ENCODE measurements at regions of chr5 and their contacts with region 1.

Region 1: GRCh38 chr5:32312647-32313523 is at the start of gene MTMR12:
- DNase-seq: peak; percentile 99 to 100 (median 100)
- ATAC-seq: peak; percentile 96
- H3K4me3 ChIP-seq: peak within 1 kb of the TSS; percentile 72
- H3K4me3 Mint-ChIP-seq: peak within 1 kb of the TSS; percentile 89 to 98 (median 92)
- H3K27ac ChIP-seq: peak within 1 kb of the TSS; percentile 79
- H3K27ac Mint-ChIP-seq: peak within 1 kb of the TSS; percentile 88 to 98 (median 95)
- H3K4me1 ChIP-seq: peaks cover 9 to 14% of the 10 kb centered on the region in 2 donors
- H3K4me1 Mint-ChIP-seq: peaks cover 30 to 43% (median 38%) of the 10 kb centered on the region in 7 donors
- H3K27me3 ChIP-seq: no peaks in the 10 kb centered on the region
- H3K27me3 Mint-ChIP-seq: no peaks in the 10 kb centered on the region
- total RNA-seq, gene MTMR12: 19.0 to 28.2 (median 24.0) TPM

Region 2: GRCh38 chr5:32206509-32207354 is 106.2 kb before region 1 on chr5:
- CTCF ChIA-PET with region 1: no interaction called
- POLR2A ChIA-PET with region 1: no interaction called
- intact Hi-C with region 1: loop called in 1 of 2 experiments (anchors 1 kb)
- DNase-seq: no peak
- ATAC-seq: no peak
- H3K4me3 ChIP-seq: no peak overlapping the region
- H3K4me3 Mint-ChIP-seq: no peak overlapping the region
- H3K27ac ChIP-seq: no peak overlapping the region
- H3K27ac Mint-ChIP-seq: peak overlapping the region in 1 of 9 donors; percentile 8
- H3K4me1 ChIP-seq: peaks cover 0 to 4% of the 10 kb centered on the region in 2 donors
- H3K4me1 Mint-ChIP-seq: peaks cover 6 to 19% (median 8%) of the 10 kb centered on the region in 7 donors
- H3K27me3 ChIP-seq: no peaks in the 10 kb centered on the region
- H3K27me3 Mint-ChIP-seq: peaks cover 0 to 8% (median 0%) of the 10 kb centered on the region in 5 donors

Region 3: GRCh38 chr5:32276173-32276853 is 36.6 kb before region 1 on chr5:
- CTCF ChIA-PET with region 1: no interaction called
- POLR2A ChIA-PET with region 1: no interaction called
- intact Hi-C with region 1: loop called (anchors 1 kb)
- DNase-seq: peak in 5 of 9 donors; percentile 6 to 44 (median 33)
- ATAC-seq: peak; percentile 87
- H3K4me3 ChIP-seq: no peak overlapping the region
- H3K4me3 Mint-ChIP-seq: peak overlapping the region in 8 of 10 donors; percentile 15 to 57 (median 43)
- H3K27ac ChIP-seq: no peak overlapping the region
- H3K27ac Mint-ChIP-seq: peak overlapping the region; percentile 41 to 91 (median 75)
- H3K4me1 ChIP-seq: peaks cover 7 to 16% of the 10 kb centered on the region in 2 donors
- H3K4me1 Mint-ChIP-seq: peaks cover 15 to 54% (median 45%) of the 10 kb centered on the region in 7 donors
- H3K27me3 ChIP-seq: no peaks in the 10 kb centered on the region
- H3K27me3 Mint-ChIP-seq: no peaks in the 10 kb centered on the region

Region 4: GRCh38 chr5:32329308-32329834 is 16.5 kb after region 1 on chr5:
- CTCF ChIA-PET with region 1: no interaction called
- POLR2A ChIA-PET with region 1: interaction called, 3 read pairs
- intact Hi-C with region 1: loop called in 1 of 2 experiments (anchors 1 kb)
- DNase-seq: peak; percentile 15 to 59 (median 45)
- ATAC-seq: peak; percentile 93
- H3K4me3 ChIP-seq: no peak overlapping the region
- H3K4me3 Mint-ChIP-seq: no peak overlapping the region
- H3K27ac ChIP-seq: no peak overlapping the region
- H3K27ac Mint-ChIP-seq: peak overlapping the region in 1 of 9 donors; percentile 1
- H3K4me1 ChIP-seq: no peaks in the 10 kb centered on the region
- H3K4me1 Mint-ChIP-seq: peaks cover 0 to 5% (median 0%) of the 10 kb centered on the region in 7 donors
- H3K27me3 ChIP-seq: no peaks in the 10 kb centered on the region
- H3K27me3 Mint-ChIP-seq: no peaks in the 10 kb centered on the region

Region 5: DNA sequence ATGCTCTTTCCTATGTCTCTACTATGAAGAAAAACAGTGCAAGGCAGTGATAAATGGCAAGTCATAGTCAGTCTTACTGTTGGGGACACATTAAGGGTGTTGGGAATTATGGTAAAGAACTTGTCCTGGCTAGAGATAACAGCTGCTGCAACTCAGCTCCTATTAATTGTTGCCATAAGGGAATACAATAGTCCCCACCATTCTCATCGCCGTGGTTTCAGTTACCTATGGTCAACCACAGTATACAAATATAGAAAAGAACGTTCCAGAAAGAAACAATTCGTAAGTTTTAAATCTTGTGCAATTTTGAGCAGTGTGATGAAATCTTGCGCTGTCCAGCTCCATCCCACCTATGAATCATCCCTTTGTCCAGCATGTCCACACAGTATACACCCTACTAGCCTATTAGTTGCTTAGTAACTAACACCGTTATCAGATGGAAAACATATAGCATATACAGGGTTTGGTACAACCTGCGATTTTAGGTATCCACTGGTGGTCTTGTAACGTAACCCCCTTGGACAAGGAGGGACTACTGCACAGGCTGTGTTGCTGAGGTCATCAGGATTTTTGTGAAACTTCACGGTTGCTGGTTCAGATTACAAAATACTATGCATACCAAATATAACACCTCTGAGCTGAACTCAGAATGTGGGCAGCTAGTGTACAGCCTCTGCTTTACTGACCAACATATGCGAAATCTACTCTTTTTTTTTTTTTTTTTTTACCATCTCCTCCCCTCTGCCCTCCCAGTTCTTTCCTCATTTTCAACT is 78.1 kb after region 1 on chr5:
- CTCF ChIA-PET with region 1: no interaction called
- POLR2A ChIA-PET with region 1: no interaction called
- intact Hi-C with region 1: no loop called
- DNase-seq: no peak
- ATAC-seq: peak; percentile 85
- H3K4me3 ChIP-seq: no peak overlapping the region
- H3K4me3 Mint-ChIP-seq: no peak overlapping the region
- H3K27ac ChIP-seq: no peak overlapping the region
- H3K27ac Mint-ChIP-seq: peak overlapping the region in 1 of 9 donors; percentile 9
- H3K4me1 ChIP-seq: no peaks in the 10 kb centered on the region
- H3K4me1 Mint-ChIP-seq: peaks cover 0 to 11% (median 0%) of the 10 kb centered on the region in 7 donors
- H3K27me3 ChIP-seq: no peaks in the 10 kb centered on the region
- H3K27me3 Mint-ChIP-seq: no peaks in the 10 kb centered on the region

Region 6: DNA sequence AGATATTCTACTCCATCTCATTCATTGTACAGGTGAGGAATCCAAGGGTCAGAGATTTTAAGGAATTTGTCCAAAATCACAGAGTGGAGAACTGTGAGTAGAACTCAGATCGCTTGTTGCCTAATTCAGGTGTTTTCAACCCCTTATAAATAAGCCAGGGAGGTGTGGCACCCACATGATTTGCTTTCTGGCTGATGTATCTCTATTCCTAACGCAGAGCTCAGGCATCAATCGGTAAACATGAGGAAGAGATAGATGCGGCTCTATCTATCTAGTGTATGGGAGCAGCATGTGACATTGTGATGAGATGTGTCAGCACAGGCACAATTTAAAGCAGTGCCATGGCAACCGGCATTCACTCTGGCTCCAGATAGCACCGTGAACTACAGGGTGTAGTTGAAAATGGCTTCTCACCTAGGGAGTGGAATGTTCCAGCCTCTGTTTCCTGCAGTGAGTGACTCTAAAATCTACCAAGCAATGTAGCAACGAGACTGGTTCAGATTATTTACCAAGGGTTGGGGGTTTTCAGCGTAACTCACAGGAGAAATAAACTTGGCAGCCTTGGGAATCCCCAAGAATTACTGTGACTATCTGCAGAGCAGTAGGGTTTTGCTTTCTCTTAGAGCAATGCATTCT is 219.1 kb after region 1 on chr5:
- CTCF ChIA-PET with region 1: interaction called, 3 read pairs
- POLR2A ChIA-PET with region 1: no interaction called
- intact Hi-C with region 1: loop called in 1 of 2 experiments (anchors 2 kb)
- DNase-seq: peak in 8 of 9 donors; percentile 28 to 78 (median 53)
- ATAC-seq: peak; percentile 82
- H3K4me3 ChIP-seq: peak overlapping the region; percentile 56
- H3K4me3 Mint-ChIP-seq: peak overlapping the region; percentile 81 to 96 (median 88)
- H3K27ac ChIP-seq: peak overlapping the region; percentile 96
- H3K27ac Mint-ChIP-seq: peak overlapping the region; percentile 93 to 99 (median 95)
- H3K4me1 ChIP-seq: peaks cover 12 to 22% of the 10 kb centered on the region in 2 donors
- H3K4me1 Mint-ChIP-seq: peaks cover 8 to 70% (median 36%) of the 10 kb centered on the region in 7 donors
- H3K27me3 ChIP-seq: no peaks in the 10 kb centered on the region
- H3K27me3 Mint-ChIP-seq: no peaks in the 10 kb centered on the region